ENCODE measurements at regions of chr5 and their contacts with region 1.

Region 1: DNA sequence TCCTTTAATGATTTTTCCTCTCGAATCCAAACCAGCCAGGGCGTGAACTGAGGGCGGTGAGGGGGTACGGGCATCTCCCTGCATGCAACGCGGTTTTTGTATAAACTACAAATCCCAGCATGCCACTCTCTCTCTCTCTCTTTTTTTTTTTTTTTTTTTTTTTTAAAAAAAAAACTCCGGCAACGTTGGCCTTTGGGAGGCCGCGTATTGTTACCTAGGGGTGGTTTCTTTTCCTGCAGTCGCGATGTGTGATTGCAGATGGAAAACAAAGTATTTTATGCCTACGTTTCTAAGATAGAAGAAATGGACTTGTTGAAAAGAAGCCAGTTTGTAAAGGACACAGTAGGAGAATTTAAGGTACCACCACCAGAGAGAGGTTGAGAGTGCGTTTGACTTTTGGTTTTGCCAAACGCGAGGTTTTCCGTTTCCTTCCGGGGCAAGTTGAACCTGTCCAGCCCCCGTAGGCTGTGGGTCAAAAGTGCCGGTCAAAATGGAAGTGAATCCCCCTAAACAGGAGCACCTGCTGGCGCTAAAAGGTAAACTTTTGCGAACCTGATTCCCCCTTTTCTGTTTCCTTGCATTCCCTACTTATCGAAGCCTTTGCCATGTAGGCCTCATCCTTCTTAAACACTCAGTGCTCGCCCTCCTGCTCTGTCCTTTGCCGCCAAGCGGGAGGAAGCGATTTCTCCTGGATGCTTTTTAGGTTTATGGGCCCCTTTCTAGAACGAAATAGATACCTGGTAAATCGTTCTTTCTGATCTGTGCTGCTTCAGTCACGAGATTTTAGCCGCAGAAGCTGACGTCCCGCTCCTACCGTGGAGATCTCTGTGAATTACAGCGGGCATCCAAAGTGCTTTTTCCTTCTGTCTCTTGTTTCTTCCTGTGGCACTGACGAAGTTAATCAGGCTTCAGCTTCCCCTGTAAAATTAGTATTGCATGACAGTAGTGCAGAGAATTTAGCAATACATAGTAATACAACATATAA is at the starts of genes SHLD3 and TRAPPC13:
- DNase-seq: peak; percentile 88 to 90
- ATAC-seq: peak; percentile 97
- H3K4me3 ChIP-seq: peak within 1 kb of the TSS; percentile 90 to 99
- H3K27ac ChIP-seq: peak within 1 kb of the TSS; percentile 38 to 89
- H3K4me1 ChIP-seq: no peaks in the 10 kb centered on the region
- H3K27me3 ChIP-seq: no peaks in the 10 kb centered on the region
- total RNA-seq, gene SHLD3: 2.7 TPM
- total RNA-seq, gene TRAPPC13: 19.1 TPM

Region 2: DNA sequence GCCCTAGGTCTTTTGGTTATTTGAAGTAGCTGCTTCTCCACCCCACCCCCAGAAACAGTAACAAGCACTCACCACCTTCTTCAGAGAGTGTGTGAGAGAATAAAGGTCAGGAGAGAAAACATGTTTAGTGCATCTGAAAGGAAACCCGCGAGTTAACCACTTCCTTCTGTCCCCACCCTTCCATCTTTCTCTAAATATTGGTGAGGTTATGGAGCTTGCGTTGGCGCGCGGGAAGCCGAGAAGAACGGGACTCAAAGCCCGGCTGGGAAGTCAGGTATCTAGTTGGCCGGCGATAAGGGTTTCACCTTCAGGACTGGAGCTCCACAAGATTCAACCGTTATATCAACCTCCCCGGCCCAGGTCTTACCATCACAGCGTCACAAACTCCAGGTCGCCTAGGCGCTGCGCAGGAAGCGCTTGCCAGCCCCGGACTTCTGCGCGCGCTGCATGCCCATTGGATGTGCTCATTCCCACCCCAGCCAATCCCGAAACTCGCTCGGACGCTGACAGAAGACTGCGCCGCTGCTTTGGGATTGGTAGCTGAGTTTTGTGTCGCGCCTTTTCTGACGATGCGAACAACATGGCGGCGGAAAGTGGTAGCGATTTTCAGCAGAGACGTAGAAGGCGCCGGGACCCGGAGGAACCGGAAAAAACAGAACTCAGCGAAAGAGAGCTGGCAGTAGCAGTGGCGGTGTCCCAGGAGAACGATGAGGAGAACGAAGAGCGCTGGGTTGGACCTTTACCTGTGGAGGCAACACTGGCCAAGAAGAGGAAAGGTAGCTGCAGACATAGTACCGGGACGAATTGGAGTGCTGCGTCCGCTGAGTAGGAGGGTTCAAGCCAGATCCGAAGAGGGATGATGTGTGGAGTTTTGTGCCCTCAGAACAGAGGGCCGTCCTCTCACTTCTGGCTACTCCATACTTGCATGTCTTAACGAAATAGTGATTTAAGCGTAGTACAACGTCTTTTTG is 61.8 kb before region 1 on chr5 and contains the starts of genes CENPK and PPWD1:
- intact Hi-C with region 1: loop called in 1 of 2 experiments (anchors 2 kb)
- DNase-seq: peak; percentile 96 to 97
- ATAC-seq: peak; percentile 99
- H3K4me3 ChIP-seq: peak within 1 kb of the TSS; percentile 49 to 89
- H3K27ac ChIP-seq: peak within 1 kb of the TSS; percentile 45 to 83
- H3K4me1 ChIP-seq: peaks cover 0 to 2% of the 10 kb centered on the region in 2 donors
- H3K27me3 ChIP-seq: no peaks in the 10 kb centered on the region
- total RNA-seq, gene CENPK: 3.7 TPM
- total RNA-seq, gene PPWD1: 31.0 to 46.9 TPM

Region 3: GRCh38 chr5:65721720-65722574 is 97.1 kb after region 1 on chr5 and contains the starts of genes NLN and SGTB:
- intact Hi-C with region 1: no loop called
- DNase-seq: peak; percentile 91 to 95
- ATAC-seq: peak; percentile 98
- H3K4me3 ChIP-seq: peak within 1 kb of the TSS; percentile 93 to 97
- H3K27ac ChIP-seq: peak within 1 kb of the TSS in 1 of 2 donors; percentile 32
- H3K4me1 ChIP-seq: no peaks in the 10 kb centered on the region
- H3K27me3 ChIP-seq: no peaks in the 10 kb centered on the region
- total RNA-seq, gene NLN: 14.0 to 16.5 TPM
- total RNA-seq, gene SGTB: 21.9 to 23.2 TPM

Region 4: GRCh38 chr5:66144074-66144833 is 519.4 kb after region 1 on chr5 and contains the start of gene SREK1:
- intact Hi-C with region 1: loop called in 1 of 2 experiments (anchors 10 kb)
- DNase-seq: peak; percentile 95 to 97
- ATAC-seq: peak; percentile 98
- H3K4me3 ChIP-seq: peak within 1 kb of the TSS; percentile 82 to 95
- H3K27ac ChIP-seq: peak within 1 kb of the TSS; percentile 51 to 95
- H3K4me1 ChIP-seq: peaks cover 0 to 2% of the 10 kb centered on the region in 2 donors
- H3K27me3 ChIP-seq: no peaks in the 10 kb centered on the region
- total RNA-seq, gene SREK1: 83.3 to 94.3 TPM

Measured in aorta (tissue), 5 donors.